WTC11 (cell line): ENCODE measurements at regions of chr10 and their contacts with region 1.

Region 1: GRCh38 chr10:97210543-97210961 is 24.8 kb upstream of the SLIT1 start:
- DNase-seq: peak; percentile 91
- ATAC-seq: peak; percentile 93
- H3K4me3 Mint-ChIP-seq: no peak overlapping the region
- H3K27ac Mint-ChIP-seq: no peak overlapping the region
- H3K4me1 Mint-ChIP-seq: no peaks in the 10 kb centered on the region
- H3K27me3 Mint-ChIP-seq: no peaks in the 10 kb centered on the region
- CTCF ChIP-seq: peak; percentile 98

Region 2: DNA sequence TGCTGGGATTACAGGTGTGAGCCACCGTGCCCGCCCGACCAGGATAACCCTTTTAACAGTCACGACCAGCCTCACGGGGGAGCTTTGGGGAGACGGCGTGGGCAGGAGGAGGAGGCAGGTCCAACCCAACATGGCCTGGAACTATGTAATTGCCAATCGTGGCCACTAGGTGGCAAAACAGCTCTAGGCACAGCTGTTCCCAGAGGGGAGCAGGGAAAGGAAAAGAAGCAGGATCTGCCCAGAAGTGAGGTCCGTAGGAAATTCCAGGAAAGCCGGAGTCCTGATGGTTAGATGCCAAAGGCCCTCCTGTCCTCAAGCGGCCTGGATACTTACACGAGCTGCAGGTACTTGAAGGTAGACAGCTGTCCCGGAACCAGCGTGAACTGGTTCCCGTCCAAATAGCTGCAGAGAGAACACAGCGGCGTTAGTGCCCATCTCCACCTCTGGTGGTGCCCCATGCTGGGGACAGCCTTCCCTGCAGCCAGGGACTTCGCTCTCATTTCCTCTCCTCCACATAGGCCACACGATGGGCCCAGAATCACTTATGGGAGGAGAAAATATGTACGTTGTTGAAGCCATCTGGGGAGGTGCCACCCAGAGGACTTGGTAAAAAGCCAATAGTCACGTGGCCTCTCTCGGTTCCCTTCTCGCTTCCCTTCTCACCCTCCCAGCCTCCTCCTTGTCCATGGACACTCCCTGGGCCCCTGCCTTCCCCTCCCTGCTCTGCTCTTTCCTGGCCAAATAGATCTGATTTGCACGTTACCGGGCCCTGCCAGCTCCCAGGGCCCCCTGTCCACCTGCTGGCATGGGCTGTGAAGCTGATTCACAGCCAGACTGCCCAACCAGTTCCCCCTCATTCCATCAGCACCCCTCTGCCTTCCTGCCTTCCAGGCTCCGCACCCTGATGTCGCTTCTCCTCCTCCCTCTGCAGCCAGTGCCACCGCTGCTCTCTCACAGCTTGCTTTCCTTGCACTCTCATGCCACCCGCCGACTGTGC is 172.9 kb before region 1 on chr10:
- CTCF ChIA-PET with region 1: interaction called, 26 read pairs
- POLR2A ChIA-PET with region 1: no interaction called
- DNase-seq: peak; percentile 95
- ATAC-seq: peak; percentile 94
- H3K4me3 Mint-ChIP-seq: peak overlapping the region; percentile 45
- H3K27ac Mint-ChIP-seq: no peak overlapping the region
- H3K4me1 Mint-ChIP-seq: peaks cover 28% of the 10 kb centered on the region
- H3K27me3 Mint-ChIP-seq: peaks cover 5% of the 10 kb centered on the region
- CTCF ChIP-seq: peak; percentile 92

Region 3: DNA sequence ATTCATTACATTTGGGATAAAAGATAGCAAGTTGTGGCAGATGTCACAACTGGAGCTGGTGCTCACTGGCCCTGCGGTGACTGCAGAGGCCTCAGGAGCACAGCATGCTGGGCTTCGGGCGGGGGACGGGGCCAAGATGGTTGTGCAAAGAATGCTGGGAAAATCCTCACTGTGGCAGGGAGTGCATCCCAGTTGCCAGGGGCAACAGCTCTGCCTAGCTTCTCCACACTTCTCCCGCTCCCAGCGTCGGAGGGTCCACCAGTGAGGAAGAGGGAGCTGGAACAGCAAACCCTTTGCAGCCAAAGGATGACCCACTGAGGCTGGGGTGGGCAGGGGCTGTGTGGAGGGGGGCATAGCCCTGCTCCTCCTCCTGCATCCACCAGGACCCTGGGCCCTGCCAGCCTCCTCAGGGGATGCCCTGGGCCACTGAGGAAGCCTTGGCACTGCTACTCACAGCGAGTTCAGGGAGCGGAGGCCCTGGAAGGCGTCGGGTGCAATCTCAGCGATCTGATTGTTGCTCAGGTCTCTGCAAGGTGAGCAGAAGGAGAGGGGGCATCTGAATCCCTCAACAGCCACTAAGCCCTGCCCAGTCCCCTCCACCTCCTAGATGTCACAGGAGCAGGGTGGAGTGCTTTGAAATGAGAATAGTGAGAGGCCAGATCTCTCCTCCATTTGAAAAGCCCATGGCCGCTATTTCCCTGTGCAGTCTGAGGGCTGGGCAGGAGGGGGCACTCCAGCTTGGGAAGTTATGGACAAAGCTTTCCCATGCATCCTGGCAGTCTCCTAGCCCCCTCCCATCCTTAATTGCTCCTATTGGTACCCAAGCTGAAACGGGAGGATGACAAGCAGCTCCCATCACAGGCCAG is 151.3 kb before region 1 on chr10:
- CTCF ChIA-PET with region 1: interaction called, 11 read pairs
- POLR2A ChIA-PET with region 1: no interaction called
- DNase-seq: peak; percentile 66
- ATAC-seq: peak; percentile 89
- H3K4me3 Mint-ChIP-seq: no peak overlapping the region
- H3K27ac Mint-ChIP-seq: no peak overlapping the region
- H3K4me1 Mint-ChIP-seq: peaks cover 8% of the 10 kb centered on the region
- H3K27me3 Mint-ChIP-seq: no peaks in the 10 kb centered on the region
- CTCF ChIP-seq: no peak

Region 4: DNA sequence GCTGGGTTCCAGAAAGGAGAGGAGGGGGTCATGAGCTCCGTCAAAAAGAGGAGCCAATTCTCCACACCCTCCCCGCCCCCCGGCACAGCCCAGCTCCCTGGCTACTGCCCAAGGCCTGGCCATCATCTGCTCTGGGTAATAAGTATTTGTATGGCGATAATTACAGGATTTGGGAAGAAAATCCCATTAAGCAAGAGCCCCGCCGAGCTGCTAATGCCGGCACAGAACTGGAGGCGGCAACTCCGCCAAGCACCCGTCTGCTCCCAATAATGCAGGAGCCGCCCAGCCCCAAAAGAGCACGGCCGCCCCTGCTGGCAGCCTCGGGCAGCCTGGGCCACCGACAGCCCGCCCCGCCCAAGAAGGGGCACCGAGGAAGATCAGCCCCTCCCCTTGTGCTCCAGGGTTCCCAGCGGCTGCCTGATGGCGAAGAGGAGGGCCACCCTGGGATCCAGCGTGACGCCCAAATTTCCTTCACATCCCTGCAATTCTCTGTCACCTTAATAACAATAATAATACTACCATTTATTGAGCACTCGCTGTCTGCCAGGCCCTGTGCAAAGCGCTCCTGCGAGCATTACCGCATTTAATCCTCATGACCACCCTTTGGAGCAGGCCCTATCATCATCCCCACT is 30.7 kb before region 1 on chr10:
- CTCF ChIA-PET with region 1: interaction called, 17 read pairs
- POLR2A ChIA-PET with region 1: no interaction called
- DNase-seq: peak; percentile 82
- ATAC-seq: peak; percentile 97
- H3K4me3 Mint-ChIP-seq: peak overlapping the region; percentile 57
- H3K27ac Mint-ChIP-seq: no peak overlapping the region
- H3K4me1 Mint-ChIP-seq: peaks cover 15% of the 10 kb centered on the region
- H3K27me3 Mint-ChIP-seq: peaks cover 36% of the 10 kb centered on the region
- CTCF ChIP-seq: no peak

Region 5: GRCh38 chr10:97196223-97197029 is 14.1 kb before region 1 on chr10:
- CTCF ChIA-PET with region 1: interaction called, 123 read pairs
- POLR2A ChIA-PET with region 1: interaction called, 4 read pairs
- DNase-seq: peak; percentile 78
- ATAC-seq: peak; percentile 91
- H3K4me3 Mint-ChIP-seq: peak overlapping the region; percentile 77
- H3K27ac Mint-ChIP-seq: no peak overlapping the region
- H3K4me1 Mint-ChIP-seq: peaks cover 13% of the 10 kb centered on the region
- H3K27me3 Mint-ChIP-seq: peaks cover 15% of the 10 kb centered on the region
- CTCF ChIP-seq: peak; percentile 76

Region 6: DNA sequence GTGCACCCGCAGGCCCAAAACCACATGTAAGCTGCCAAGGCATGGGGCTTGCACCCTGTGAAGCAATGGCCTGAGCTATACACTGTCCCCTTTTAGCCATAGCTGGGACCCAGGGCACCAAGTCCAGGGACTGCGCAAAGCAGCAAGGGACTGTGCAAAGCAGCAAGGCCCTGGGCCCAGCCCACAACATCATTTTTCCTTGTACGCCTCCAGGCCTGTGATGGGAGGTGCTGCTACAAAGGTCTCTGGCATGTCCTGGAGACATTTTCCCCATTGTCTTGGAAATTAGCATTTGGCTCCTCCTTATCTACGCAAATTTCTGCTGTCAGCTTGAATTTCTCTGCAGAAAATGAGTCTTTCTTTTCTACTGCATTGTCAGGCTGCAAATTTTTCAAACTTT is 57.1 kb after region 1 on chr10:
- CTCF ChIA-PET with region 1: no interaction called
- POLR2A ChIA-PET with region 1: no interaction called
- DNase-seq: peak; percentile 36
- ATAC-seq: peak; percentile 83
- H3K4me3 Mint-ChIP-seq: peak overlapping the region; percentile 26
- H3K27ac Mint-ChIP-seq: peak overlapping the region; percentile 65
- H3K4me1 Mint-ChIP-seq: peaks cover 33% of the 10 kb centered on the region
- H3K27me3 Mint-ChIP-seq: no peaks in the 10 kb centered on the region
- CTCF ChIP-seq: no peak